ENCODE measurements at regions of chr4 and their contacts with region 1.

Region 1: GRCh38 chr4:93791570-93792195 is 36.9 kb upstream of the ATOH1 start:
- DNase-seq: peak; percentile 46 to 70 (median 60)
- ATAC-seq: peak; percentile 95
- H3K4me3 ChIP-seq: no peak overlapping the region
- H3K27ac ChIP-seq: no peak overlapping the region
- H3K4me1 ChIP-seq: no peaks in the 10 kb centered on the region
- H3K27me3 ChIP-seq: no peaks in the 10 kb centered on the region
- CTCF ChIP-seq: peak; percentile 72 to 81 (median 77)
- EP300 ChIP-seq: no peak
- POLR2A ChIP-seq: no peak
- RAD21 ChIP-seq: peak; percentile 74 to 76

Region 2: GRCh38 chr4:93759506-93759905 is 32.2 kb before region 1 on chr4:
- CTCF ChIA-PET with region 1: no interaction called
- POLR2A ChIA-PET with region 1: no interaction called
- in situ Hi-C with region 1: no loop called
- intact Hi-C with region 1: no loop called
- DNase-seq: no peak
- ATAC-seq: no peak
- H3K4me3 ChIP-seq: no peak overlapping the region
- H3K27ac ChIP-seq: no peak overlapping the region
- H3K4me1 ChIP-seq: no peaks in the 10 kb centered on the region
- H3K27me3 ChIP-seq: no peaks in the 10 kb centered on the region
- CTCF ChIP-seq: no peak
- EP300 ChIP-seq: no peak
- POLR2A ChIP-seq: no peak
- RAD21 ChIP-seq: no peak

Region 3: DNA sequence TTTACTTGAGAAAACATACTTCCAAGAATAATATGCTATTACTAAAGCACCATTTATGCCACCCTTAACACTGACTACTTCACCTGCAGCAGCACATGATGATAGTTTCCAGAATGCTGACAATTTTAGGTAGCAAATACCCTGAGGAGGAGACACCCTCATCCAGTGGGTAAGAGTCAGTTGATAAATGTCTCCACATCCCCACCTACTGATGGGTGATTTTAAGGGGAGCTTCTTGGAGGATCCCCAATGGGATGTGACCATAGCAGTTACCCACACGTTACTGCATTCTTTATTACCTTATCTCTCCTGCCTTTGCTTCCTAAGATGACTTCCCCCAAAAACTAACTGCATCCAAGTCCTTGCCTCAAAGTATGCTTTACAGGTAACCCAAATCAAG is 284.8 kb after region 1 on chr4:
- CTCF ChIA-PET with region 1: no interaction called
- POLR2A ChIA-PET with region 1: no interaction called
- in situ Hi-C with region 1: no loop called
- intact Hi-C with region 1: loop called (anchors 2 kb)
- DNase-seq: peak in 2 of 4 experiments; percentile 30 to 39
- ATAC-seq: peak; percentile 83
- H3K4me3 ChIP-seq: peak overlapping the region; percentile 19
- H3K27ac ChIP-seq: peak overlapping the region; percentile 13
- H3K4me1 ChIP-seq: no peaks in the 10 kb centered on the region
- H3K27me3 ChIP-seq: no peaks in the 10 kb centered on the region
- CTCF ChIP-seq: peak in 2 of 3 experiments; percentile 32 to 45; a peak in 3 of 6 replicates
- EP300 ChIP-seq: no peak
- POLR2A ChIP-seq: no peak
- RAD21 ChIP-seq: peak in 1 of 2 experiments; percentile 39; a peak in 2 of 4 replicates

Region 4: GRCh38 chr4:94256828-94257227 is 465.1 kb after region 1 on chr4:
- CTCF ChIA-PET with region 1: interaction called, 8 read pairs
- POLR2A ChIA-PET with region 1: no interaction called
- in situ Hi-C with region 1: loop called (anchors 10 kb)
- intact Hi-C with region 1: loop called (anchors 5 kb)
- DNase-seq: peak in 1 of 4 experiments; percentile 5
- ATAC-seq: peak; percentile 58; the same call in 1 of the 3 replicates
- H3K4me3 ChIP-seq: no peak overlapping the region
- H3K27ac ChIP-seq: no peak overlapping the region
- H3K4me1 ChIP-seq: no peaks in the 10 kb centered on the region
- H3K27me3 ChIP-seq: no peaks in the 10 kb centered on the region
- CTCF ChIP-seq: peak in 1 of 3 experiments; percentile 48; a peak in 2 of 6 replicates
- EP300 ChIP-seq: no peak
- POLR2A ChIP-seq: no peak
- RAD21 ChIP-seq: peak in 1 of 2 experiments; percentile 9; a peak in 1 of 4 replicates

Region 5: DNA sequence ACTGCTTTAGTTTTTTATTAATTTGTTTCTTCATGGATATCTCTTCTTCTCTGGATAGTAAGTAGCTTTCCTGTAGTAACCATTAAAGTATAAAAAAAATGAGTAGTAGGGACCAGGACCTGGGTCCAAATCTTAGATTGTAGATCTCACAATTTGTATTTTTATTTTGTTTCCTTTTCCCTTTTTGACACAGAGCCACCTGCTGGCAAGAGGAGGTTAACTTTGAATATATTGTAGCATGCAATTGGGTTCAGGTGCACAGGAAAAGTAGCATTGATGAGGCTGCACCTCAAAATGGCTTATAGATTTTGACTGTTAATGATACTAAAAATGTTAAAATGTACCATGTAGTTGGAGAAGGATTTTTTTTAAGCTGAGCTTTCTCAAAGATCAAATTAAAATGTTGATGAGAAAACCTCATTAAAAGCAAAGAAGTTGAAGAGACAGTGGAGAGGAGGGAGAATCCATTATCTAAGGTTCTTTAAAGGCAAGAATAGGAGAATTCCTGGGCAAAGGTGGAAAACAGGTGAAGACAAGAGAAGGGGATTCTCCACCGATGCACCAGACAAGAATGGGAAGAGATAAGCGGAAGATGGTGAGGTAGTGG is 599.2 kb after region 1 on chr4:
- CTCF ChIA-PET with region 1: no interaction called
- POLR2A ChIA-PET with region 1: no interaction called
- in situ Hi-C with region 1: no loop called
- intact Hi-C with region 1: loop called (anchors 10 kb)
- DNase-seq: peak in 3 of 4 experiments; percentile 23 to 42 (median 26)
- ATAC-seq: peak; percentile 68
- H3K4me3 ChIP-seq: no peak overlapping the region
- H3K27ac ChIP-seq: no peak overlapping the region
- H3K4me1 ChIP-seq: no peaks in the 10 kb centered on the region; a peak in 1 of 5 replicates
- H3K27me3 ChIP-seq: no peaks in the 10 kb centered on the region
- CTCF ChIP-seq: peak; percentile 48 to 65 (median 54); a peak in 4 of 6 replicates
- EP300 ChIP-seq: no peak
- POLR2A ChIP-seq: no peak
- RAD21 ChIP-seq: peak; percentile 47 to 62

Region 6: DNA sequence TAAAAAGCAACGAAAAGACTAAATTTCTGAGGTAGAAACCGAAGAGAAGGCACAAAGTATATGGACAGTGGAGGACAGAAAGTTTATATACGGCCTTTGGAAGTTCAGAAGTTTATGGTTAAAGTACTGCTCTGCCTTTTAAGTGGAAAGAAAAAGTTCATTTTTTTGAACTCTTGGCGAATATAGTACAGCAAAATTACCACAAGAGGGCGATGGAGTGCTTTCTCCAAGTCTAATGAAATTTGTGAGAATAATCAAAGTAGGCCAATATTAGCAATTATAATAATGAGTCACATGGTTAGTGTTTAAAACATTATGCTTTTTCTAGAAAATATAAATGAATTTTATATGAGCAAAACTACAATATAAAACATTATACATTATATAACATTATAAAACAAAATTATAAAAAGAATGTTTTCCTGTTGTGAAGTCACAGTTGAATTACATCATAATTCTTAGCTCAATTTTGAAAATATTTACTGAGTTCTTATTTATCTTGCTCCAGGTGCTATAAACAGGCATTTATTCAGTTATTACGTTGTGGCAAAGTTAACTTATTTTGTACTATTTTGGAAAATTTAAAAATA is 829.9 kb after region 1 on chr4:
- CTCF ChIA-PET with region 1: no interaction called
- POLR2A ChIA-PET with region 1: no interaction called
- in situ Hi-C with region 1: loop called (anchors 25 kb)
- intact Hi-C with region 1: no loop called
- DNase-seq: peak; percentile 36 to 53 (median 48)
- ATAC-seq: peak; percentile 74
- H3K4me3 ChIP-seq: no peak overlapping the region
- H3K27ac ChIP-seq: no peak overlapping the region
- H3K4me1 ChIP-seq: no peaks in the 10 kb centered on the region
- H3K27me3 ChIP-seq: no peaks in the 10 kb centered on the region
- CTCF ChIP-seq: peak; percentile 53 to 79 (median 54); a peak in 4 of 6 replicates
- EP300 ChIP-seq: no peak
- POLR2A ChIP-seq: no peak
- RAD21 ChIP-seq: peak; percentile 64 to 68

Measured in K562 (cell line).